ENCODE measurements at regions of chr6 and their contacts with region 1.

Region 1: GRCh38 chr6:24855395-24856245 is 56.9 kb upstream of the ARMH2 start:
- DNase-seq: peak; percentile 75
- H3K4me3 Mint-ChIP-seq: no peak overlapping the region
- H3K27ac Mint-ChIP-seq: peak overlapping the region; percentile 97
- H3K4me1 Mint-ChIP-seq: peaks cover 52% of the 10 kb centered on the region
- H3K27me3 Mint-ChIP-seq: no peaks in the 10 kb centered on the region

Region 2: GRCh38 chr6:24699521-24700359 is 155.9 kb before region 1 on chr6:
- CTCF ChIA-PET with region 1: no interaction called
- DNase-seq: no peak
- H3K4me3 Mint-ChIP-seq: no peak overlapping the region
- H3K27ac Mint-ChIP-seq: no peak overlapping the region
- H3K4me1 Mint-ChIP-seq: no peaks in the 10 kb centered on the region
- H3K27me3 Mint-ChIP-seq: no peaks in the 10 kb centered on the region

Region 3: DNA sequence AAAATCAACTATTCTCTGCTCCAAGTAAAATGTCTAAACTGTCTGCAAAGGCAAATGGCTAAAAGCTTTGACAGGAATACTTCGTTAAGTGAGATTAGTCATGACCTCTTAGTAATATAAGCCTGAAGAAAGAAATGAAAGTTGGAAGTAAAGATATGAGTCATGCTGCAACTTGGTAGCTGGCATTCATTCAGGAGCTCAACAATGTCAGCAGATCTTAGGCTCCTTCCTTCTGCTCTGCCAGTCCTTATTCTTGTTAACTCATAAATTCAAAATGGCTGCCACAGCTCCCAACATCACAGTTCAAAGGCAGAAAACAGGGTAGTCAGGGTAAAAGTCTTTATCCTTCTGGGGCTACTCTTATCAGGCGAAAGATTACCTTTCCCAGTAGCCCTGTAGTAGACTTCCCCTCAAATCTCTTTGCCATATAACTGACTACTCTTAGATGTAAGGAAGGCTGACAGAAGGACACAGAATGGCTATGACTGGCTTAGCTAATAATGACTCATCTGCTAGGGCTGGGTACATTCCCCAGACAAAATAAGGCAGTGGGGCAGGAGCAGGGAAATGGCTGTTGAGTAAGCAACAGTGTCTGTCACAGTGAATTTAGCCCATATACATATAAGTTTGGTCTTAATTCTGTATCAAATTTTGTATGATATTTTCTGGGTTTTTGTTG is 112.2 kb before region 1 on chr6:
- CTCF ChIA-PET with region 1: no interaction called
- DNase-seq: no peak
- H3K4me3 Mint-ChIP-seq: no peak overlapping the region
- H3K27ac Mint-ChIP-seq: no peak overlapping the region
- H3K4me1 Mint-ChIP-seq: peaks cover 10% of the 10 kb centered on the region
- H3K27me3 Mint-ChIP-seq: peaks cover 7% of the 10 kb centered on the region

Region 4: DNA sequence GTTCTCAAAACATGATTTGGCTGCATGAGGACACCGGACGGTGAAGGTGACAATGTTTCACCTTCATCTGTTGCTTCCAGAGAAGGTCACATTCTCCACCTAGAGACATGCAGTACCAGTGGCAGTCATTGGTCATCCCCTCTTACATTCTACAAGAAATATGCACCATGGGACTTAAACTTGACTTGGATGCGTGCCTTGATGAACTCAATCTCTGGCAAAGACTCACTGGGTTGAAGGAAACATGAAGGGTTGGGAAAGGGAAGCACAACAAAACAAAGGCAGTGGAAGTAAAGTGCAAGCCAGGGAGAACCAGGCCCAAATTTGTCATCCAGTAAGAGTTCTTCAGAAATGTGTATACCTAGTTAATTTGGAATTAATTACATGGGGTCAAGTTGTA is 17.5 kb before region 1 on chr6:
- CTCF ChIA-PET with region 1: no interaction called
- DNase-seq: no peak
- H3K4me3 Mint-ChIP-seq: no peak overlapping the region
- H3K27ac Mint-ChIP-seq: peak overlapping the region; percentile 64
- H3K4me1 Mint-ChIP-seq: peaks cover 79% of the 10 kb centered on the region
- H3K27me3 Mint-ChIP-seq: no peaks in the 10 kb centered on the region

Region 5: DNA sequence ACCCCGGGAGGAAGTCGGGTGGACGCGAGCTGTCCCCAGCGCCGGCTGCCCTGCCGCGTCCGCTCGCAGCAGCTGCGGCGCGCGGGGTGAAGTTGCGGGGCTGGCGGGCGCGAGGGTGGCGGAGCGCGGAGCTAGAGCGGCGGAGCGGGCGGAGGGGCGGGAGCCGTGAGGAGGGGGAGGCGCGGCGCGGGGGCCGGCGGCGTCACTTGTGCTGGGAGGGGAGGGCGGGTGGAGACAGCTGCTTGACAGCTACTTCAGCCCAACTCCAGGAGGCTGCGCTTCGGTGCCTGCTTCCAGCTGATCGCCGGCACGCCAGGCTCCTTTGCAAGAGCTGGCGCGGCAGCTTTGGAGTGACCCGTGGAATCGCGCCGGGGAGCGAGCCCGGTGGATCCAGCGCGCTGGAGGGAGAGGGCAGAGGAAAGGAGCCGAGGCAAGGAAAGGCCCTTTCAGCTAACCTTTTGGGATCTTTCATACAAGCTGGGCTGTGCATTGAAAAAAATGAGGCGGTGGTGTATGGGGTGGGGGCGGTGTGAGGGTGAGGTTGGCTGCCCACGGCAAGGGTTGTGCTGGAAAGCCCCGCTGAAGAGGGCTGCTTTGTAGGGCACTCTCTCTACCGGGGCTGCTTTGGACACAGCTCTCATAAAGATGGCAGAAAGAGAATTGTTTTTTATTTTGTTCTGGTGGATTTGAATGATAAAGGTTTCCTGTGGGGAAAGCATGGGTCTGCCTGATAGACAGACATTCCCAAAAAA is 55.5 kb after region 1 on chr6:
- CTCF ChIA-PET with region 1: interaction called, 10 read pairs
- DNase-seq: peak; percentile 66
- H3K4me3 Mint-ChIP-seq: peak overlapping the region; percentile 92
- H3K27ac Mint-ChIP-seq: peak overlapping the region; percentile 93
- H3K4me1 Mint-ChIP-seq: peaks cover 94% of the 10 kb centered on the region
- H3K27me3 Mint-ChIP-seq: no peaks in the 10 kb centered on the region

Region 6: DNA sequence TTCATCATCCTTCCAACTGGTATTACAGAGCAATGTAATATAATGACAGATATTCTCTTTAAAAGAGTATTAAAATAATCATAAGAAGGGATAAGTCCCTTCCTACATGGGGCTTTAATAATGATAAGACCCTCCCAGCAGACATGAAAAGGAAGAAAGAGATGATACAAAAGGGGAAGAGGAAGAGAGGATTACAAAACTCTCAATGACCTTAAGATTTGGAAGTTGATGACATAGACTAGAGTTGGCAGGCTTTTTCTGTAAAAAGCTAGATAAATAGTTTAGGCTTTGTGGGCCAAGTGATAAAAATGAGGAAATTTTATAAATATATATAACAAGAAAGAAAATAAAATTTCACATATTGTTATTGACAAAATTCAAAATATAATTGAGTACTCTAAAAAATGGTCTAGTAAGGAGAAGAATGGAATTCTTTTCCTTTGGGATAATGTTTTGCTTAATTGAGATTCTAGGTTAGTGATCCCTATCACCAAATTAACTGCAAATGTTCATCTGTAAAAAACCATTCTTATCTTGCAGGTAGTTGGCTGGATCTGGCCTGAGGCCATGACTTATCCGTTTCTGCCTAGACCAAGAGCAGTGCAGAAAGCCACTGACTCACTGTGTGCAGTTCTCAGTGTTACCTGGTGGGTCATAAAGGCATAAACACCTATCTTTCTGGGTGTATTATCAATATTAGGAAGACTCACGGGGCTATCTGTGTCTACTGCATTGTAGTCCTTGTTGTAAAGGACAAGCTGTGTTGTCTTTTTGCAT is 69.1 kb after region 1 on chr6:
- CTCF ChIA-PET with region 1: interaction called, 10 read pairs
- DNase-seq: peak; percentile 47
- H3K4me3 Mint-ChIP-seq: peak overlapping the region; percentile 64
- H3K27ac Mint-ChIP-seq: peak overlapping the region; percentile 87
- H3K4me1 Mint-ChIP-seq: peaks cover 85% of the 10 kb centered on the region
- H3K27me3 Mint-ChIP-seq: no peaks in the 10 kb centered on the region

Region 7: GRCh38 chr6:25070547-25071366 is 215.1 kb after region 1 on chr6:
- CTCF ChIA-PET with region 1: interaction called, 23 read pairs
- DNase-seq: peak; percentile 86
- H3K4me3 Mint-ChIP-seq: peak overlapping the region; percentile 21
- H3K27ac Mint-ChIP-seq: peak overlapping the region; percentile 91
- H3K4me1 Mint-ChIP-seq: peaks cover 11% of the 10 kb centered on the region
- H3K27me3 Mint-ChIP-seq: peaks cover 7% of the 10 kb centered on the region

Measured in activated naive CD4-positive, alpha-beta T cell treated with anti-CD3 and anti-CD28 coated beads, Interleukin-2, amount 10 ng/mL, durations not matched to agents 7 days and 5 days (primary cell).